Activated T-helper 1 cell treated with anti-CD3 and anti-CD28 coated beads, Interleukin-12 subunit alpha, Interleukin-12 subunit beta, Interleukin-2, Interleukin-4 antibody, amounts not matched to agents 30 ng/mL and 10 ng/mL and 1 ng/mL, durations not matched to agents 14 hours and 24 hours and 36 hours (primary cell): ENCODE measurements at regions of chr2 and their contacts with region 1.

Region 1: GRCh38 chr2:191566344-191566743 is 111.6 kb upstream of the NABP1 start:
- DNase-seq: peak; percentile 25
- H3K4me3 Mint-ChIP-seq: no peak overlapping the region
- H3K27ac Mint-ChIP-seq: no peak overlapping the region
- H3K4me1 Mint-ChIP-seq: peaks cover 42% of the 10 kb centered on the region
- H3K27me3 Mint-ChIP-seq: peaks cover 51% of the 10 kb centered on the region

Region 2: GRCh38 chr2:191555092-191555742 is 11.1 kb before region 1 on chr2:
- intact Hi-C with region 1: loop called (anchors 1 kb)
- DNase-seq: peak; percentile 70
- H3K4me3 Mint-ChIP-seq: no peak overlapping the region
- H3K27ac Mint-ChIP-seq: no peak overlapping the region
- H3K4me1 Mint-ChIP-seq: peaks cover 10% of the 10 kb centered on the region
- H3K27me3 Mint-ChIP-seq: peaks cover 25% of the 10 kb centered on the region

Region 3: DNA sequence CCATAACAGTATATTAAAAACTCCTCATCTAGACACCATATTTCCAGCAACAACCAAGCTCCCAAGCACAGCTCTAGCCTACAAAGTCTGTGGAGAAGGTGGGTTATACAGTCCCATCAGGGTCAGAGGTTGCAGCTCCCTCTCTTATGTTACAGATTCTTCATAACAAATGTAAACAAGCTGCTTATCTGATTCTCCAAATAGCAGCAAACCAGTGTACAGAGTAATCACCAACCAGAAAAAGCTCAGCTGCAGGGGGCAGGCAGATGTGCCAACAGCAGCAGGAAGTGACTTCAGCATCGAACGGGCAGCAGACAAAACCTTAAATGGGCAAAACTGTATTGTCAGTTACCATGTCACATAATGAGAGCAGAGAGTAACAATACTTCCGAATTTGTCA is 58.7 kb after region 1 on chr2:
- intact Hi-C with region 1: loop called (anchors 1 kb)
- DNase-seq: peak; percentile 34
- H3K4me3 Mint-ChIP-seq: peak overlapping the region; percentile 19
- H3K27ac Mint-ChIP-seq: peak overlapping the region; percentile 42
- H3K4me1 Mint-ChIP-seq: peaks cover 64% of the 10 kb centered on the region
- H3K27me3 Mint-ChIP-seq: no peaks in the 10 kb centered on the region

Region 4: GRCh38 chr2:191691016-191691735 is 124.8 kb after region 1 on chr2:
- intact Hi-C with region 1: loop called (anchors 1 kb)
- DNase-seq: peak; percentile 31
- H3K4me3 Mint-ChIP-seq: no peak overlapping the region
- H3K27ac Mint-ChIP-seq: peak overlapping the region; percentile 67
- H3K4me1 Mint-ChIP-seq: peaks cover 60% of the 10 kb centered on the region
- H3K27me3 Mint-ChIP-seq: no peaks in the 10 kb centered on the region

Region 5: DNA sequence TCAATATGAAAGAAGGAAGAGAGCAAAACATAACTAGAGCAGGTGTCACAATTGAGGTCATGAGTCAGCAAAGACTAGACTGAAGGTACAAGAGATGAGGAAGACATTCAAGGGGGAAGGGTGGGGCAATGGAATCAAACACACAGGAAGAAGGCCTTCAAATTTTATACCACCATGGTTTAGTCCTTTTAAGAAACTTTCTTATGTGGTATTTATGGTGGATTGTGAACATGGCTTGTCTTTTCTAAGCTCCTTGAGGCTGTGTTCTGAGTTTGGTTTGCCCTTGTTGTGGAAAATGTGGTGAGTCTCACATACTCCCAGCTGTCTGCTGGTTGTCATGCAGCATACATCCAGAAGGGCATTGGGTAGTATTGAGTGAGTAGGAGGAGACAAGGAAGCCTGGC is 173.7 kb after region 1 on chr2:
- intact Hi-C with region 1: loop called (anchors 1 kb)
- DNase-seq: peak; percentile 64
- H3K4me3 Mint-ChIP-seq: peak overlapping the region; percentile 2
- H3K27ac Mint-ChIP-seq: peak overlapping the region; percentile 45
- H3K4me1 Mint-ChIP-seq: peaks cover 18% of the 10 kb centered on the region
- H3K27me3 Mint-ChIP-seq: peaks cover 25% of the 10 kb centered on the region